ENCODE measurements at regions of chr12 and their contacts with region 1.

Region 1: DNA sequence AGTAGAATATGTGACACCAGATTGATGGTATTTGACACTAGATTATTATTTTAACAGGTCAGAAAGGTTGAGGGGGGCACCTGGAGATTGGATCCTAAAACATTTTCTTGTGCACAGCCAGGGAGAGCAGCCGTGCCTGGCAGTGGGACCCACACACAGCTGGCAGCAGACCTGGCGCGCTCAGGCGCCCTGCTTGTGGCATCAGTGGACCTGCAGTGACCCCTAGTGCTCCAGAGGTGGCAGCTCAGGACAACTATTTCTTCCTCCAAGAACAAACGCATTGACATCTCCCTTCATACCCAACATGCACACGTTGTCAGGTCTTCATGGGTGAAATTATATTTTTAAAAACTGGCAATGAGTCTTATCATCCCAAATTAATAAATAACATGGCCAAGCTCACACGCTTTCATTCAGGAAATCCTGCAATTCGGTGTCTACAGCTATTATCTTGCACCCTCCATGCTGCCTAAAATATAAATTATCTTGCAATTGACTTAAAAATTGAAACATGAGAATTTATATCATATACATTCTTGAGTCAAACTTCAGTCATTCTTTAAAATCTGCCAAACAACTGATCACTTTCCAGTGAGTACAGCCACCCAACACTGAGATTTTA is 7.7 kb upstream of the TMEM132D start:
- DNase-seq: peak in 2 of 9 experiments; percentile 29 to 35
- ATAC-seq: no peak
- H3K4me3 ChIP-seq: no peak overlapping the region
- H3K4me3 Mint-ChIP-seq: no peak overlapping the region
- H3K27ac ChIP-seq: no peak overlapping the region
- H3K27ac Mint-ChIP-seq: no peak overlapping the region
- H3K4me1 ChIP-seq: no peaks in the 10 kb centered on the region
- H3K4me1 Mint-ChIP-seq: no peaks in the 10 kb centered on the region
- H3K27me3 ChIP-seq: no peaks in the 10 kb centered on the region
- H3K27me3 Mint-ChIP-seq: peaks cover 2% of the 10 kb centered on the region
- CTCF ChIP-seq: no peak

Region 2: GRCh38 chr12:128783129-128783574 is 1128.4 kb before region 1 on chr12:
- CTCF ChIA-PET with region 1: no interaction called
- POLR2A ChIA-PET with region 1: no interaction called
- intact Hi-C with region 1: loop called in 1 of 2 experiments (anchors 5 kb)
- DNase-seq: peak in 4 of 9 experiments; percentile 22 to 72 (median 56)
- ATAC-seq: peak; percentile 85
- H3K4me3 ChIP-seq: peak overlapping the region in 1 of 2 experiments; percentile 16
- H3K4me3 Mint-ChIP-seq: peak overlapping the region; percentile 82
- H3K27ac ChIP-seq: peak overlapping the region; percentile 53 to 84
- H3K27ac Mint-ChIP-seq: peak overlapping the region; percentile 97
- H3K4me1 ChIP-seq: peaks cover 4% of the 10 kb centered on the region
- H3K4me1 Mint-ChIP-seq: peaks cover 11% of the 10 kb centered on the region
- H3K27me3 ChIP-seq: no peaks in the 10 kb centered on the region
- H3K27me3 Mint-ChIP-seq: no peaks in the 10 kb centered on the region
- CTCF ChIP-seq: no peak